CD8-positive, alpha-beta T cell (primary cell): ENCODE measurements at regions of chr14 and their contacts with region 1.

Region 1: GRCh38 chr14:22052795-22053194 is 379.2 kb upstream of the OR4E1 start:
- DNase-seq: peak in 4 of 9 experiments; percentile 17 to 49 (median 30)
- ATAC-seq: peak; percentile 81
- H3K4me3 ChIP-seq: peak overlapping the region; percentile 20 to 45
- H3K4me3 Mint-ChIP-seq: peak overlapping the region; percentile 79
- H3K27ac ChIP-seq: peak overlapping the region; percentile 39 to 42
- H3K27ac Mint-ChIP-seq: peak overlapping the region; percentile 97
- H3K4me1 ChIP-seq: peaks cover 11% of the 10 kb centered on the region
- H3K4me1 Mint-ChIP-seq: peaks cover 40% of the 10 kb centered on the region
- H3K27me3 ChIP-seq: no peaks in the 10 kb centered on the region
- H3K27me3 Mint-ChIP-seq: no peaks in the 10 kb centered on the region
- CTCF ChIP-seq: no peak

Region 2: DNA sequence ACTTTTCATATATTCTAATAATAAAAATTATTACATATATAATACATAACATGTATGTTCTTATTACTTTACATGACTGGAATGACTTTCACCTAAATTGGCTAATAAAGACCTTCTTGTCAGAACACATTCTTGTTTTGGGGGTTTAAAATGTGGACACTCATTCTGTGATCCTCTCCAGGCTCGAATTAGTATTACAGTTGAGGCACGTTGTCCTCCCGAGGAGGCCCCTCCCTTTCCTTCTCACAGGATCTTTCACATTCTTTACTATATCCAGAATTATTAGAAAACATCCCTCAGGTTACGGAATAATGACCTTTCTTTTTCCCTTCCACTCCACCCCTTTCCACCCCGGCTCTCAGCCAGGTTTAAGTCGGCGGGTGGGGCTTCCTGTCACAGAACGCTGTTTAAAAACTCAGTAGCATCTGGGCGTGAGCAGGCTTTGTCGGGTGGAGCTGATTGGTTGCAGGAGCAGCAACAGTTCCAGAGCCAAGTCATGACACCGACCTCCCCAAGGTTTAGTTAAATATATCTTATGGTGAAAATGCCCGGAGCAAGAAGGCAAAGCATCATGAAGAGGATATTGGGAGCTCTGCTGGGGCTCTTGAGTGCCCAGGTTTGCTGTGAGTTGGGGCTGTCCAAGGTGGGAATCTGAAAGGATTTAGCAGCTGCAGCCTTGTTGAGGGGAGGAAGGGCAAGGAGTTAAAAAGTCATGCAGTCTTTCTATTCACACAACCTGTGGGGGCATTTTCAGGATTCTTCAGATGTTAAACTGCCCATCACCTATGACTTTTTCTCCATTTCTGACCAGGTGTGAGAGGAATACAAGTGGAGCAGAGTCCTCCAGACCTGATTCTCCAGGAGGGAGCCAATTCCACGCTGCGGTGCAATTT is 17.6 kb after region 1 on chr14:
- CTCF ChIA-PET with region 1: interaction called, 8 read pairs
- POLR2A ChIA-PET with region 1: interaction called, 11 read pairs
- intact Hi-C with region 1: no loop called
- DNase-seq: peak in 8 of 9 experiments; percentile 24 to 77 (median 60)
- ATAC-seq: peak; percentile 78
- H3K4me3 ChIP-seq: peak overlapping the region; percentile 49 to 69
- H3K4me3 Mint-ChIP-seq: peak overlapping the region; percentile 90
- H3K27ac ChIP-seq: peak overlapping the region; percentile 44 to 57
- H3K27ac Mint-ChIP-seq: peak overlapping the region; percentile 94
- H3K4me1 ChIP-seq: peaks cover 26% of the 10 kb centered on the region
- H3K4me1 Mint-ChIP-seq: peaks cover 51% of the 10 kb centered on the region
- H3K27me3 ChIP-seq: no peaks in the 10 kb centered on the region
- H3K27me3 Mint-ChIP-seq: no peaks in the 10 kb centered on the region
- CTCF ChIP-seq: no peak

Region 3: DNA sequence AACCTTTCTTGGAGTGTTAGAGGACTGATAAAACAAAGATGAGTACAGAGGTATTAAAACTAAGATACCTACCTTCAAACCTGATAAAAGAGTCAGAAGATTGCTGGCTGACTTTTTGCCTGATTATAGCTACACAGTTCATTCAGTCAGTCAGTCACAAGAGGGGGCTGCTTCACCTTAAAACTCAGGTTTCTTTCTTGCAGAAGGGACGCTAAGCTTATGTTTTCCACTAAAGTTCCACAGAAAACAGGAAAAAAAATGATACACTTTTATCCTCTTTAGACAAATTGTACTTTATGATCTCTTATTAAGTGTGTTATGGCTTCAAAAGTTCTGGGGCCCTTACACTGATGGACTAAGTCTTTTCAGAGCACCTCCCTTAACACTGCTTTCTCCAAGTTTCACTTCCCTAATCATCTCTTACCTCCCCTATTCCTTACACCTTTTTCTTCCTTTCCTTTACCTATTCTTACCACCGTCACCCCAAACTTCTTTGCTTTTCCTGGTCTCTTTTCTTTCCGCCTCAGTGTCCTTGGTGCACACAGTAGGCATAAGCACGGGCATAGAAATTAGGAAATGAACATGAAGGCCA is 69.5 kb after region 1 on chr14:
- CTCF ChIA-PET with region 1: no interaction called
- POLR2A ChIA-PET with region 1: no interaction called
- intact Hi-C with region 1: no loop called
- DNase-seq: peak in 3 of 9 experiments; percentile 24 to 62 (median 43)
- ATAC-seq: peak; percentile 43
- H3K4me3 ChIP-seq: no peak overlapping the region
- H3K4me3 Mint-ChIP-seq: peak overlapping the region; percentile 79
- H3K27ac ChIP-seq: peak overlapping the region in 1 of 2 experiments; percentile 54
- H3K27ac Mint-ChIP-seq: peak overlapping the region; percentile 93
- H3K4me1 ChIP-seq: no peaks in the 10 kb centered on the region
- H3K4me1 Mint-ChIP-seq: peaks cover 19% of the 10 kb centered on the region
- H3K27me3 ChIP-seq: no peaks in the 10 kb centered on the region
- H3K27me3 Mint-ChIP-seq: no peaks in the 10 kb centered on the region
- CTCF ChIP-seq: peak; percentile 14

Region 4: DNA sequence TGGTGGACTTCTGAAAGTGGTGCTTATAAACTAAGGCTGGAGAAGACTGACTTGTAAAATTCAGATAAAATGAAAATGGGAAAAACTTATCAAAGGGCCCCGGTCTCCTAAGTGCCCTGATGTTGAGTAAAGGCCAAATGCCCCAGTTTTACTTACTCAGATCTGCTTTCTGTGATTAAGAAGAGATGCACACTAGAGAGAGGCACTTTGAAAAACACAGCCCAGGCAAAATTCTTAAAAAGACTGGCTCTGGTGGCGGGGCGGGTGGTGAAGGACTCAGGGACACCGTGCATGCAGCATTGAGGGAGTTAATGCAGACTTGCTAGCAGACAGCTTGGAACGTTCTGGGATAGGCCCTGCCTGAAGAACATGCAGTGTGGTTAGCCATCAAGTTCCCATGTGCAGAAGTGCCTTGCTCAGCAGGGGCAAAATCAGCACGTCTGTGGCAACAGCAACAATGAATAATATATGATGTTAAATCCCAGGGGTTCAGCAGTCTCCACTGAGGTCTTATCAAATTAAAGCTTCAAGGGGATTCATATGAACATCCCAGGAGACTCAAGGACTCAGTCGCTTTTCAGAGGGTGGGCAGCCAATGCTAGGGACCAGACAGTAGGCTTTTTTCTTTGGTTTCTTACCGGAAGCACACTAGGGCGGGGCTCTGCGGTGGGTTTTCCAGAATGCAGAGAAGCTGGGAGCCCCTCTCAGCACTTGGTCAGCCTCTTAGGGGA is 431.2 kb after region 1 on chr14:
- CTCF ChIA-PET with region 1: no interaction called
- POLR2A ChIA-PET with region 1: interaction called, 3 read pairs
- intact Hi-C with region 1: loop called in 1 of 2 experiments (anchors 5 kb)
- DNase-seq: peak in 1 of 9 experiments; percentile 46
- ATAC-seq: no peak
- H3K4me3 ChIP-seq: peak overlapping the region; percentile 23 to 43
- H3K4me3 Mint-ChIP-seq: peak overlapping the region; percentile 76
- H3K27ac ChIP-seq: peak overlapping the region in 1 of 2 experiments; percentile 59
- H3K27ac Mint-ChIP-seq: peak overlapping the region; percentile 68
- H3K4me1 ChIP-seq: no peaks in the 10 kb centered on the region
- H3K4me1 Mint-ChIP-seq: peaks cover 9% of the 10 kb centered on the region
- H3K27me3 ChIP-seq: no peaks in the 10 kb centered on the region
- H3K27me3 Mint-ChIP-seq: no peaks in the 10 kb centered on the region
- CTCF ChIP-seq: no peak